ENCODE measurements at regions of chr5 and their contacts with region 1.

Region 1: GRCh38 chr5:156815988-156816599 is 34.0 kb upstream of the PPP1R2B start:
- DNase-seq: peak; percentile 77
- H3K4me3 Mint-ChIP-seq: no peak overlapping the region
- H3K27ac Mint-ChIP-seq: peak overlapping the region; percentile 28
- H3K4me1 Mint-ChIP-seq: peaks cover 7% of the 10 kb centered on the region
- H3K27me3 Mint-ChIP-seq: no peaks in the 10 kb centered on the region

Region 2: DNA sequence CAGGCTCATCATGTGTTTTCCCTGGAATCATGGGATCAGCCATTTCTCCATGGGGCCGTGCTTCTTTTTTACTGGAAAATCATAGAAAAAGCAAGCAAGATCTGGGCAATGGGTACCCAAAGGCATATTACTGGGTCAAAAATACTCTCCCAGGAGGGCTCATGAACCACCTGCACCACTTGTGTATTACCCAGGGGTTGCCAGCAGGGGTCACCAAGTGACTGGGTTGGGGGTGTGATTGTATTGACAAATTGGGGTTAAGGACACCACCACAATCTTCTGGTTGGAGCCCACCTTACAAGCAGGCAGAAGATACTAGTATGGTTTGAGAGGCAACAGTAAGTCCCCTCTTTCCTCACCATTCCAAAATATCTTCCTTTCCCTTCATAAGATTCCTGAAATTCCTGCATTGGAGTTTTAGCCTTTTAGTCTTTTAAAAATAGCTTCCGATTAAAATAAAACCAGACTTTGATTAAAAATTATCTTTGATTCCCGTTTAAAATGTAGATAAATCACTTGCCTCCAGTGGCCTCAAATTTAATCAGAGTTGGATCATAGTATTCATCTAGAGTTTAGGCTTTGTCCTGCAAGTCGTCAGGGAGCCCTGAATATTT is 1199.2 kb before region 1 on chr5:
- CTCF ChIA-PET with region 1: no interaction called
- intact Hi-C with region 1: loop called (anchors 1 kb)
- DNase-seq: peak; percentile 69
- H3K4me3 Mint-ChIP-seq: no peak overlapping the region
- H3K27ac Mint-ChIP-seq: no peak overlapping the region
- H3K4me1 Mint-ChIP-seq: no peaks in the 10 kb centered on the region
- H3K27me3 Mint-ChIP-seq: peaks cover 32% of the 10 kb centered on the region

Region 3: DNA sequence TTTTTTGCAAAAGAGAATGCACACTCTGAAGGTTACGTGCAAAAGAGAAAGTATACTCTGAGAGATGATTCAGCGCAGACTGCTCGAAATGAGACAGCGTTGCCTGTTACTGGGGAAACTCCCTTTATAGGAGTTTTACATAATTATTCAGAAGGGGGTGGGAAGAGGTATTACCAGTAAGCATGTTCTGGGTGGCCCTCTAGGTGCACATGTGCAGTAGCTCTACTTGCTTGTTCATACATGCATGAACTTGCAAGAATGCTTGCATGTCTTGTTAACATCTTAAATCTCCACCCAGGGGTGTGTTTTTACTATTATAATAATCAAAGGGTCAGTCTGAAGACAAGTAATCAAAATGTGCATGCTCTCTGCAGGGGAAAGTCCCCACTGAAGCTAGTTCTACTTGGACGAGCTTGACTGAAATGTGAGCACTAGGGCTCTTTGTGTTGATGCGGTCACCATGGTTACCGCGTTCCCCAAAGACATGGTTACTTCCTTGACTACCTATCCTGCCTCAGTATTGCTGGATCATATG is 413.6 kb before region 1 on chr5:
- CTCF ChIA-PET with region 1: no interaction called
- intact Hi-C with region 1: loop called (anchors 10 kb)
- DNase-seq: peak; percentile 78
- H3K4me3 Mint-ChIP-seq: no peak overlapping the region
- H3K27ac Mint-ChIP-seq: no peak overlapping the region
- H3K4me1 Mint-ChIP-seq: peaks cover 12% of the 10 kb centered on the region
- H3K27me3 Mint-ChIP-seq: peaks cover 8% of the 10 kb centered on the region

Region 4: DNA sequence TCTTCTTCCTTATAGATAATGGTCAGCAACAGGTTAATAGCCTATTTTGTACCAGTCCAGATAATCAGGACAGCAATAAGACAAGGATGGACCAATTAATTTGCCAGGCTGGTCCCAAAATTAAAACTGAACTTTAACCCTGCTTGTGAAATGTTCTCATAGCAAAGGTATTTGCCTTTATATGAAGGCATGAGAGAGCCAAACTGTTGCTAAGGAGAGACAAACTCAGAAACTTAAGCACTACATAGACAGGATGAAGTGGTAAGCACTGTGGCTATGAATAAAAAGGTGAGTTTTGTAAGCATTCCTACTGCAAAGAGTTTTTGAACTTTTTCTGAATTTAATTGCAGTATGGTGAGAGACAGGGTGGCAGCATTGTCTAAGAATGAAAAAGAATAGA is 140.7 kb before region 1 on chr5:
- CTCF ChIA-PET with region 1: no interaction called
- intact Hi-C with region 1: loop called (anchors 5 kb)
- DNase-seq: no peak
- H3K4me3 Mint-ChIP-seq: no peak overlapping the region
- H3K27ac Mint-ChIP-seq: no peak overlapping the region
- H3K4me1 Mint-ChIP-seq: no peaks in the 10 kb centered on the region
- H3K27me3 Mint-ChIP-seq: no peaks in the 10 kb centered on the region

Region 5: DNA sequence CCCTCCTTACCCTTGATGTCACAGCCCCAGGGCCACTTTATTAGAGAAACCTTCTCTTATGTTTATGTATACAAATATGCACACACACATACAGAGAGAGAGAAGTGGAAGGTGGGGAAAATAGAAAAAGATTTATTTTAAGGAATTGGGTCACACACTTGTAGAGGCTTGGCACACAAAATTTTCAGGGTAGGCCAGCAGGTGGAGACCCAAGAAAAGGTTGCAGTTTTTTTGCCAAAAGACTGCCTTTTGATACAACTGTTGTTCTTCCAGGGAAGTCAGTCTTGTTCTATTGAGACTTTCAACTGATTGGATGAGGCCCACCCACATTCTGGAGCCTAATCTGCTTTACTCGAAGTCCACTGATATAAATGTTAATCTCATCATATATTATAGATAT is 97.1 kb before region 1 on chr5:
- CTCF ChIA-PET with region 1: no interaction called
- intact Hi-C with region 1: loop called (anchors 2 kb)
- DNase-seq: peak; percentile 11
- H3K4me3 Mint-ChIP-seq: no peak overlapping the region
- H3K27ac Mint-ChIP-seq: no peak overlapping the region
- H3K4me1 Mint-ChIP-seq: no peaks in the 10 kb centered on the region
- H3K27me3 Mint-ChIP-seq: no peaks in the 10 kb centered on the region

Measured in activated naive CD4-positive, alpha-beta T cell treated with anti-CD3 and anti-CD28 coated beads for 36 hours (primary cell).